SK-N-SH (cell line): ENCODE measurements at regions of chr6 and their contacts with region 1.

Region 1: GRCh38 chr6:29737707-29738630 is 14.7 kb downstream of the HLA-F start:
- DNase-seq: peak; percentile 64
- H3K4me3 ChIP-seq: no peak overlapping the region; a peak in 1 of 4 replicates
- H3K27ac ChIP-seq: no peak overlapping the region
- H3K4me1 ChIP-seq: no peaks in the 10 kb centered on the region
- H3K27me3 ChIP-seq: peaks cover 2% of the 10 kb centered on the region; the same call in 1 of the 2 replicates
- CTCF ChIP-seq: peak; percentile 74
- EP300 ChIP-seq: no peak
- RAD21 ChIP-seq: peak; percentile 82

Region 2: DNA sequence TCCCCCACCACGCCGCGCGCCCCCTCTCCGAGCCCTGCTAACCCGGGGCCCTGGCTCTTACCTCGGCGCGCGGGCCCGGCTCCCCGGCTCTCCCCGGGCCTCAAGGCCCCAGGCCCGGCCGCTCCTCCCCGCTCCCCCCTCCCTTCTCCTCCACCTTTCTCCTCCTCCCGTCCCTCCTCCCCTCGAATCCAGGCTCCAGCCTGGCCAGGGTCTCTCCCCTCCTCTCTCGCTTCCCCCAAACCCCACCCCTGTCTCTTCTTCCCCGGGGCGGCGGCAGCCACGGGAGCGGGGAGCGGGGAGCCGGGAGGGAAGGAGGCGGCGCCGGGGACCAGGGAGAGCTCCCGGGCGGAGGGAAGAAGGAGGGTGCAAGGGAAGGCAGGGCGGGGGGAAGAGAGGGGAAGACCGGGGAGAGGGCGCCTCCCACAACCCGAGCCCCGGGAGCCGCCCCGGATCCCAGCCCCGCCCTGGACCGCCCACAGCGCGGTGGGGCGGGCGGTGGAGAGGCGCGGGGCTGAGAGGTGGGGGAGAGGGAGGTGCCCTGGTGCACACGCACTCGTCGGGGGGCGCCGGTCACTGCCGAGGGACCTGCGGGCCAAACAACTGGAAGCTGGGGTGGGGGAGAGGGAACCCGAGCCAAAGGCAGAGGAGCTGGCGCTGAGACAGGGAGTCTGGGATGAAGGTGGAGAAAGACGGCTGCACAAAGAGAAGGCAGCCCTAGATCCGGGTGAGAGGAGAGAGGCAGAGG is 105.0 kb before region 1 on chr6 and contains the start of gene GABBR1:
- CTCF ChIA-PET with region 1: no interaction called
- POLR2A ChIA-PET with region 1: no interaction called
- DNase-seq: peak; percentile 99
- H3K4me3 ChIP-seq: peak within 1 kb of the TSS; percentile 62 to 90
- H3K27ac ChIP-seq: peak within 1 kb of the TSS; percentile 33 to 71; a peak in 3 of 4 replicates
- H3K4me1 ChIP-seq: peaks cover 16 to 17% of the 10 kb centered on the region in 2 experiments; a peak in 2 of 4 replicates
- H3K27me3 ChIP-seq: no peaks in the 10 kb centered on the region
- CTCF ChIP-seq: no peak
- EP300 ChIP-seq: no peak
- RAD21 ChIP-seq: no peak
- polyA plus RNA-seq, gene GABBR1: 26.8 and 33.8 TPM in 2 replicates

Region 3: DNA sequence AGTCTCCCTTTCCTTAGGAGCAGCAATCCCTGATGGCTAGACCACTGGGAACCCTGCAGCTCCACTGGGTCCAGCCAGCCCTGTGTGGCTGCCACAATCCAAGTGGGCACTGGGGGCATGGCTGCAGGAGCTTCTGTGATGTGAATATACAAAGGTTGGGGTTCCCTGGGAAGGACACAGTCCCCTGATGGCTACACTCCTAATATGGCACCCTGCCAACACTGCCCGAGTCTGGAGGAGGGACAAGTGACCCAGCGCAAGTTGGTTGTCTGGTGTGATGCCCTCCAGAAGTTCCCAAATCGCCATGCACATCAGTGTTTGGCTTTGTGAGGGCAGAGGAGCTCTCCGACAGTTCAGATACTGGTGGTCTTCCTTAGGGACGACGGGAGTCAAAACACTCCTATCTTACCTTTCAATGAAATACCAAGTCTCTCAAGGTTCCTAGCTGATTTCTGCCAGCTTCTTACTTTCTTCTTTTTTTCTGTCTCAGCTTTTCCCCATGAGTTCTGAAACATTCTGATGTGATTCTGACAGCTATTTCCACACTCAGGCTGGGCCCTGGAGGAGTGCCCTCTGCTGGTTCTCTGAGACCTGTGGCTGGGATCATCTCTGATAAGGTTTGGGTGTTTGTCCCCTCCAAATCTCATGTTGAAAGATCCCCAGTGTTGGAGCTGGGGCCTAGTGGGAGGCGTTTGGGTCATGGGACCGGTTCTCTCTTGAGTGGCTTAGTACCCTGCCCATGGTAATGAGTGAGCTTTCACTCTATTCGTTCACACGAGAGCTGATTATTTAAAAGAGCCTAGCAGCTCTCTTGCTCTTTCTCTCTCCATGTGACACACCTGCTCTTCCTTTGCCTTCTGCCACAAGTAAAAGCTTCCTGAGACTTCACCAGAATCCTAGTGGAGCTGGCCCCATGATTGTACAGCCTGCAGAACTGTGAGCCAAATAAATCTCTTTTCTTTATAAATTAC is 41.5 kb before region 1 on chr6:
- CTCF ChIA-PET with region 1: no interaction called
- POLR2A ChIA-PET with region 1: no interaction called
- DNase-seq: no peak
- H3K4me3 ChIP-seq: no peak overlapping the region; a peak in 1 of 4 replicates
- H3K27ac ChIP-seq: no peak overlapping the region
- H3K4me1 ChIP-seq: no peaks in the 10 kb centered on the region
- H3K27me3 ChIP-seq: no peaks in the 10 kb centered on the region; the same call in 1 of the 2 replicates
- CTCF ChIP-seq: peak; percentile 50
- EP300 ChIP-seq: no peak
- RAD21 ChIP-seq: no peak

Region 4: DNA sequence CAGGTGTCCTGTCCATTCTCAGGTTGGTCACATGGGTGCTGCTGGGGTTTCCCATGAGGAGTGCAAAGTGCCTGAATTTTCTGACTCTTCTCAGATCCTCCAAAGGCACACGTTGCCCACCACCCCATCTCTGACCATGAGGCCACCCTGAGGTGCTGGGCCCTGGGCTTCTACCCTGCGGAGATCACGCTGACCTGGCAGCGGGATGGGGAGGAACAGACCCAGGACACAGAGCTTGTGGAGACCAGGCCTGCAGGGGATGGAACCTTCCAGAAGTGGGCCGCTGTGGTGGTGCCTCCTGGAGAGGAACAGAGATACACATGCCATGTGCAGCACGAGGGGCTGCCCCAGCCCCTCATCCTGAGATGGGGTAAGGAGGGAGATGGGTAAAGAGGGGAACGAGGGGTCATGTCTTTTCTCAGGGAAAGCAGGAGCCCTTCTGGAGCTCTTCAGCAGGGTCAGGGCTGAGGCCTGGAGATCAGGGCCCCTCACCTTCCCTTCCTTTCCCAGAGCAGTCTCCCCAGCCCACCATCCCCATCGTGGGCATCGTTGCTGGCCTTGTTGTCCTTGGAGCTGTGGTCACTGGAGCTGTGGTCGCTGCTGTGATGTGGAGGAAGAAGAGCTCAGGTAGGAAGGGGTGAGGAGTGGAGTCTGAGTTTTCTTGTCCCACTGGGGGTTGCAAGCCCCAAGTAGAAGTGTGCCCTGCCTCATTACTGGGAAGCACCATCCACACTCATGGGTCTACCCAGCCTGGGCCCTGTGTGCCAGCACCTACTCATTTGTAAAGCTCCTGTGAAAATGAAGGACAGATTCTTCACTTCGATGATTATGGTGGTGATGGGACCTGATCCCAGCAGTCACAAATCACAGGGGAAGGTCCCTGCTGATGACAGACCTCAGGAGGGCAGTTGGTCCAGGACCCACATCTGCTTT is 12.8 kb before region 1 on chr6:
- CTCF ChIA-PET with region 1: interaction called, 21 read pairs
- POLR2A ChIA-PET with region 1: no interaction called
- DNase-seq: no peak
- H3K4me3 ChIP-seq: no peak overlapping the region
- H3K27ac ChIP-seq: no peak overlapping the region
- H3K4me1 ChIP-seq: no peaks in the 10 kb centered on the region; a peak in 1 of 4 replicates
- H3K27me3 ChIP-seq: peaks cover 45% of the 10 kb centered on the region; the same call in 1 of the 2 replicates
- CTCF ChIP-seq: no peak
- EP300 ChIP-seq: no peak
- RAD21 ChIP-seq: no peak

Region 5: GRCh38 chr6:29752451-29753308 is 14.7 kb after region 1 on chr6:
- CTCF ChIA-PET with region 1: interaction called, 10 read pairs
- POLR2A ChIA-PET with region 1: no interaction called
- DNase-seq: peak; percentile 77
- H3K4me3 ChIP-seq: peak overlapping the region; percentile 48 to 66
- H3K27ac ChIP-seq: no peak overlapping the region
- H3K4me1 ChIP-seq: peaks cover 0 to 12% of the 10 kb centered on the region in 2 experiments; a peak in 1 of 4 replicates
- H3K27me3 ChIP-seq: peaks cover 55% of the 10 kb centered on the region; the same call in 1 of the 2 replicates
- CTCF ChIP-seq: peak; percentile 85
- EP300 ChIP-seq: no peak
- RAD21 ChIP-seq: peak; percentile 56

Region 6: GRCh38 chr6:29834564-29835436 is 96.8 kb after region 1 on chr6:
- CTCF ChIA-PET with region 1: interaction called, 22 read pairs
- POLR2A ChIA-PET with region 1: no interaction called
- DNase-seq: peak; percentile 41
- H3K4me3 ChIP-seq: peak overlapping the region in 1 of 2 experiments; percentile 31; a peak in 1 of 4 replicates
- H3K27ac ChIP-seq: no peak overlapping the region
- H3K4me1 ChIP-seq: no peaks in the 10 kb centered on the region
- H3K27me3 ChIP-seq: peaks cover 19% of the 10 kb centered on the region
- CTCF ChIP-seq: peak; percentile 75
- EP300 ChIP-seq: no peak
- RAD21 ChIP-seq: peak; percentile 73